Activated T-helper 1 cell treated with anti-CD3 and anti-CD28 coated beads, Interleukin-12 subunit alpha, Interleukin-12 subunit beta, Interleukin-2, Interleukin-4 antibody, amounts not matched to agents 30 ng/mL and 10 ng/mL and 1 ng/mL, durations not matched to agents 14 hours and 24 hours and 36 hours (primary cell): ENCODE measurements at regions of chr10 and their contacts with region 1.

Region 1: GRCh38 chr10:24383681-24384106 is 174.8 kb downstream of the KIAA1217 start:
- DNase-seq: peak; percentile 60
- H3K4me3 Mint-ChIP-seq: peak overlapping the region; percentile 61
- H3K27ac Mint-ChIP-seq: peak overlapping the region; percentile 91
- H3K4me1 Mint-ChIP-seq: peaks cover 35% of the 10 kb centered on the region
- H3K27me3 Mint-ChIP-seq: peaks cover 3% of the 10 kb centered on the region

Region 2: DNA sequence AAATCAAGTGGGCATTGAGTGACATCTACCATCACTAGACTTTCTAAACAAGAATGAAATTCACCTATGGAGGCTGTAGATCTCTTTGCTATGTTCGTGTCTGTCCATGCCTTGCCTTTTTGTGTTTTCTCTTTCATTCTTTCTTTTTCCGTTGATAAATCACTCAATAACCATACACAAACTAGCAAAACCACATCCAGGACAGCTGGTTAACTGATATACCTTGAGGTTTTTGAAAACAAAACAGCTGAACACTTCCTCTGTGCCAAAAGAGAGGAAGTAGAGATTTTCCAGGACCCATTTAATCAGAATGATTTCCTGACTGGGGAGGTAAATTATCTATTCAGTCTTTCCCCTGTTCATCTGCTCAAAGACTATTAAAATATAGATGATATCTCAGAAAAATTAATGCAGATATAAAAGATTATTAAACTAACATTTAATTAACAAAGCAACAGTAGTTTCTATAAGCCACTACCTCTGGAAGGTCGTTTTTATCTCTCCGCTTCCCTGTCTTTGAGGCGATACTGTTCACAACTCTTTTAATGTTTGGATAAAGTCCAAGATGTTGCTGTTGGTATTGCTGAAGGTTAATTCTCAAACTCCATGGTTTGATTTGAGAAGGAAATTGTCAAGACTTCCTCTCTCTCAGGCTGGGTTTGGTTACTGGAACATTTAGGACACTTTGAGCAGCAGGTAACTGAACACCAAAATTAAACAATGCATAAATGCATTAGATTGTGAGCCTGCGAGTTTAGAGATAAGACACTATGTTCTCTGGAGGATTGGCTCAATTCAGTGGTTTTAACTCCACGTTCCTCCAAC is 1014.7 kb before region 1 on chr10:
- intact Hi-C with region 1: loop called (anchors 5 kb)
- DNase-seq: peak; percentile 42
- H3K4me3 Mint-ChIP-seq: peak overlapping the region; percentile 63
- H3K27ac Mint-ChIP-seq: peak overlapping the region; percentile 79
- H3K4me1 Mint-ChIP-seq: peaks cover 64% of the 10 kb centered on the region
- H3K27me3 Mint-ChIP-seq: peaks cover 2% of the 10 kb centered on the region

Region 3: GRCh38 chr10:24209946-24210491 is 173.7 kb before region 1 on chr10:
- intact Hi-C with region 1: loop called (anchors 1 kb)
- DNase-seq: peak; percentile 8
- H3K4me3 Mint-ChIP-seq: peak overlapping the region; percentile 83
- H3K27ac Mint-ChIP-seq: peak overlapping the region; percentile 90
- H3K4me1 Mint-ChIP-seq: peaks cover 39% of the 10 kb centered on the region
- H3K27me3 Mint-ChIP-seq: peaks cover 24% of the 10 kb centered on the region

Region 4: DNA sequence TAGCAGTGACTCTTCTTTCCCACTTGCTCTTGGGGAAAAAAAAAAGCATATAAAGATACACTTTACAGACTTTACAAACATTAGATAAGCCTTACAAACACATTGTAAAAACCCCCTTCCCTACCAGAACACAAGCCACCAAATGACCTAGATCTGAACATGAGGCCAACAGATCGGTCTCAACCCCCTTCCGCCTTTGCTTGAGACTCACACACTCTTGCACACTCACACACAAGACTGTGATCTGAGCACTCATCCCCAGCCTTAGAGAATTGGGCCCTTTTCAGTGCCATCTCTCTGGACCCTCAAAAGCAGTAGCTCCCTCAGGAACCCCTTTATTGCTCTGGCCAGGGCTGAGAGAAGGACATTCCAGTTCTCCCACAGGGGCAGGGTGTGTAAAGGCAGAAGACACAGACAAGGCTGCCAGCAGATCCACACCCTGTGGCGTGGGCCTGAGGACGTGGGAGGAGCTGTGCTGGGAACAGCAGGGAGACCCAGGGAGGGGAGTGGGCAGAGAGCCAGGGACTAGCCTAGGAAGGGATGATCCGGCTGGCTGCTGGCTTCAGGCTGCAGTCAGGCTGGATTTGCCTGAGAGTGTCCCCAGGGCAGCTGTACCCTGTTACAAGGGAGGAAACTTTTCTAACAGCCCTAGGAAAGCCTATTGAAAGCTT is 31.9 kb after region 1 on chr10:
- intact Hi-C with region 1: loop called (anchors 2 kb)
- DNase-seq: no peak
- H3K4me3 Mint-ChIP-seq: no peak overlapping the region
- H3K27ac Mint-ChIP-seq: no peak overlapping the region
- H3K4me1 Mint-ChIP-seq: no peaks in the 10 kb centered on the region
- H3K27me3 Mint-ChIP-seq: no peaks in the 10 kb centered on the region

Region 5: DNA sequence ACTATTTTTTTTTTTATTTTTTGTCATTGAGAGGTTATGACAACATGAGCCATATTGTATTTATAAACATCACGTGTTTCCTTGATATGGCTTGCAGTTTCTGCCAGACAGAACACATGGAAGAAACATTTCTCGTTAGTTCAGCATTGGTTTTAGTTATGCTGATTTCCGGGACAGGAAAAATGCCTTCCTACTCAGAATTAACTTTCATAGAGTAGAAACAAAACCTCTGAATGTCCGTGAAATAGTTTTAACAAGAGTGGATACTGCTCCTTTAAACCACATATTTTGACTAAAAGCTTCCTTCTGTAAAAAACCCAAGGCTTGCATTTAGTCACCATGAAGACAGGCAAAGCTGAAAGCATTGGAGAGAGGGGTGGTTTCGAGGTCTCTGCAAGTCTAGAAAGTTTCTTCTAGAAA is 65.6 kb after region 1 on chr10:
- intact Hi-C with region 1: loop called (anchors 1 kb)
- DNase-seq: no peak
- H3K4me3 Mint-ChIP-seq: peak overlapping the region; percentile 4
- H3K27ac Mint-ChIP-seq: peak overlapping the region; percentile 72
- H3K4me1 Mint-ChIP-seq: peaks cover 41% of the 10 kb centered on the region
- H3K27me3 Mint-ChIP-seq: peaks cover 14% of the 10 kb centered on the region

Region 6: DNA sequence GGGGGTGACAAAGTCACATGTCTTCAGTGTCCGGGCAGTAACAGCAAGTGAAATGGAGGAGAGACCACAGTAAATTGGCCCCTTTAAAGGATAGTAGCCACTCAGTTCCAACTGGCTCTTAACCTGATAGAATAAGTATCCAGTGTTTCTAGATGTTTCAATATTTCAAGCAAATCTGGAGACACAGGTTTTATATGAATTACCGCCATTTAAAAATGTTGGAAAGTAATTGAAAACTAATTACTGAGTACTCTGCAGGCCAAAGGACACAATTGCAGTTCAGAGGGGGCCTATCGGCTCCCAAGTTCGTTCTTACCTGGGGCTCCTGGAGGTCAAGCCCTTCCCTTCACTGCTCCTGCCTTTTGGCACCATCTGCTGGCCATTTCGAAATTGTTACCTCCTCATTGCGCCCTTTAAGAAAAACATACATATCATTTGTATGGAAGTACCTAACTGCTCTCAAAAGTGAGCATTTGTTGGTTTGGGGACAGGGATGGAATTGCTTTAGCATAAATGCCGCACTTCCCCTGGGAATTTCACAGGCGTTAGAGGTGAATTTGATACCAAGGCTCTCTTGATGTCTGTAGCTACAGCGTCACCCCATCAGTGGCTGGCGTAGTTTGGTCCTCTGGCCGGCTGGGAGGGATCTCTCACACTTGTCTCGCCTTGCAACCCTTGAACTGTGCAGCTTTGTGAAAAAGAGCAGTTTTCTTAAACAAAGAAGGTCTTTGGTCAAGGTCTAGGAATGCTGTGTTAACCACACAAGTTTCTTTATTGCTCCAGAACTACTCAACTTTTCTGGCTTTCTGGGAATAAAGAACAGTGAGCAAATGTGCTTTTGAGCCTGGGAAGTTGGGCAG is 120.0 kb after region 1 on chr10:
- intact Hi-C with region 1: loop called (anchors 5 kb)
- DNase-seq: no peak
- H3K4me3 Mint-ChIP-seq: no peak overlapping the region
- H3K27ac Mint-ChIP-seq: no peak overlapping the region
- H3K4me1 Mint-ChIP-seq: peaks cover 9% of the 10 kb centered on the region
- H3K27me3 Mint-ChIP-seq: peaks cover 2% of the 10 kb centered on the region

Region 7: DNA sequence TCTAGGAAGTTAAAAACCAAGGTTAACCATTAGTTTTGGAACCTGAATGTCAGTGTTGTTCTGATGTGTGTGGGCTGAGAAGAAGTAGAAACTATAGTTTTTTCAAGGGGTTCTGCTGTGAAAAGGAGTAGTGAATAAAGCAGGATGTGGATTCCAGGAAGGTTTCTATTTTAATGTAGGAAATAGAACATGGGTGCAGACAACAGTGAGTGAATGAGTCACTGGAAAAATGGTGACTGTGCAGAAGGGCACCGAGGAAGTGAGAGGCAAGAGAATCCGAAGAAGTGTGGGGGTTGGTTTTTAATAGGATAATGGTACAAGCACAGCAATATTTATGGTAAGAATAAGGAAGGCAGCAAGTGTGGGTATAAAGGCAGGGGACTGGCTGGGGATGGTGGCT is 219.6 kb after region 1 on chr10:
- intact Hi-C with region 1: loop called (anchors 1 kb)
- DNase-seq: no peak
- H3K4me3 Mint-ChIP-seq: peak overlapping the region; percentile 45
- H3K27ac Mint-ChIP-seq: peak overlapping the region; percentile 95
- H3K4me1 Mint-ChIP-seq: peaks cover 38% of the 10 kb centered on the region
- H3K27me3 Mint-ChIP-seq: no peaks in the 10 kb centered on the region

Region 8: DNA sequence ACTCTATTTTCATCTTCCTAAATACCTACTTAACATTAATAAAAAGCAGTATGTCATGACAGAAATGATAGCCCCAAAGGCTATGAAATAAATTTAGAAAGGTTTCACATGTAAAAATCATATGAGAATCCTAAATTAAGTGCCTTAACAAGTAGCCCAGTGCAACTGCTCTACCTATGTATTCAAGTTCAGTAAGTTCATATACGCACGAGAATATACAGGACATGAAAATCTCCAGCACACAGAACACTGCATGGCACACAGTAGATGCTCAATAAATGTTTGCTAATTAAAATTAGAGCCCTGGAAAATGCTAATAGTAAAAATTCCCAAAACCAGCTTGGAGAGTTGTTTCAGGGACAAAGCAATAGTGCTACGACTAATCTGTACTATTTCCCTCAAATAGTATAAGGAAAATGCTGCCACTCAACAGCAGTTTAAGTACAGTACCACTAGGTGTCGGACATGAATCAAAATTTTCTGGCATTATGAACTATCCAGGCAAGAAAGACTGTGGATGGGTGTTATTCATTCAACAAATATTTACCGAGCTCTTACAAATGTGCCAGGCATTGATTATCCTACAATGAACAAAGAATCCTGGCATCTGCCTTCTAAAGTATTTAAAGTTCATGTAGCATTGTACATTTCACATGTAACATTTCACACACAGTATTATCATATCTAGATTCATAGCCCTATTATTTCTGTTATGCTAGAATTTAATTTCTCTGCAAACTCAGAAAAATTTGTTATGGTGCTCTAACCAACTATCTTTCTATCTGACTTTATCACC is 259.1 kb after region 1 on chr10:
- intact Hi-C with region 1: no loop called
- DNase-seq: no peak
- H3K4me3 Mint-ChIP-seq: no peak overlapping the region
- H3K27ac Mint-ChIP-seq: no peak overlapping the region
- H3K4me1 Mint-ChIP-seq: no peaks in the 10 kb centered on the region
- H3K27me3 Mint-ChIP-seq: no peaks in the 10 kb centered on the region